CD8-positive, alpha-beta T cell (primary cell): ENCODE measurements at regions of chr2 and their contacts with region 1.

Region 1: DNA sequence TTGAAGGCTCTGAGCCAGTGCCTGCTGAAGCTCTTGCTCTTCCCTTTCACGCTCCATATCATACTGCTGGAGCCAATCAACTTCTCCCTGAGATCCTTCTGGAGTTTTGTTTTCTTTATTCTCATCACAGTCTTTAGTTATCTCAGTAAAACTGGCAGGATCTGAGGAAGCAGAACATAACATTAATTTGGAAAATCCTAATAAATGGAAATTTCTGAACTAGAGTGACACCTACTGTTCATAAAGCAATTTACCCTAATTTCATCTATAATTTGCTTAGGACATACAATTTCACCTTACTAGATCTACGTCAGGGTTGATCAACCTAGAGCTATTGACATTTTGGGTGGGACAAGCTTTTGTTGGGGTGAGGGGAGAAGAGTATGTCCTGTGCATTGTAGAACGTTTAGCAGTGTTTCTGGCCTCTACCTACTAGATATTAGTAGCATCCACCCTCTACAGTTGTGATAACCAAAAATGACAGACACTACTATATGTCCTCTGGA is 47.1 kb downstream of the VIL1 start:
- DNase-seq: peak in 2 of 9 experiments; percentile 21 to 46
- ATAC-seq: peak; percentile 26
- H3K4me3 ChIP-seq: no peak overlapping the region
- H3K4me3 Mint-ChIP-seq: no peak overlapping the region
- H3K27ac ChIP-seq: no peak overlapping the region
- H3K27ac Mint-ChIP-seq: no peak overlapping the region
- H3K4me1 ChIP-seq: no peaks in the 10 kb centered on the region
- H3K4me1 Mint-ChIP-seq: peaks cover 11% of the 10 kb centered on the region
- H3K27me3 ChIP-seq: no peaks in the 10 kb centered on the region
- H3K27me3 Mint-ChIP-seq: no peaks in the 10 kb centered on the region
- CTCF ChIP-seq: peak; percentile 52

Region 2: DNA sequence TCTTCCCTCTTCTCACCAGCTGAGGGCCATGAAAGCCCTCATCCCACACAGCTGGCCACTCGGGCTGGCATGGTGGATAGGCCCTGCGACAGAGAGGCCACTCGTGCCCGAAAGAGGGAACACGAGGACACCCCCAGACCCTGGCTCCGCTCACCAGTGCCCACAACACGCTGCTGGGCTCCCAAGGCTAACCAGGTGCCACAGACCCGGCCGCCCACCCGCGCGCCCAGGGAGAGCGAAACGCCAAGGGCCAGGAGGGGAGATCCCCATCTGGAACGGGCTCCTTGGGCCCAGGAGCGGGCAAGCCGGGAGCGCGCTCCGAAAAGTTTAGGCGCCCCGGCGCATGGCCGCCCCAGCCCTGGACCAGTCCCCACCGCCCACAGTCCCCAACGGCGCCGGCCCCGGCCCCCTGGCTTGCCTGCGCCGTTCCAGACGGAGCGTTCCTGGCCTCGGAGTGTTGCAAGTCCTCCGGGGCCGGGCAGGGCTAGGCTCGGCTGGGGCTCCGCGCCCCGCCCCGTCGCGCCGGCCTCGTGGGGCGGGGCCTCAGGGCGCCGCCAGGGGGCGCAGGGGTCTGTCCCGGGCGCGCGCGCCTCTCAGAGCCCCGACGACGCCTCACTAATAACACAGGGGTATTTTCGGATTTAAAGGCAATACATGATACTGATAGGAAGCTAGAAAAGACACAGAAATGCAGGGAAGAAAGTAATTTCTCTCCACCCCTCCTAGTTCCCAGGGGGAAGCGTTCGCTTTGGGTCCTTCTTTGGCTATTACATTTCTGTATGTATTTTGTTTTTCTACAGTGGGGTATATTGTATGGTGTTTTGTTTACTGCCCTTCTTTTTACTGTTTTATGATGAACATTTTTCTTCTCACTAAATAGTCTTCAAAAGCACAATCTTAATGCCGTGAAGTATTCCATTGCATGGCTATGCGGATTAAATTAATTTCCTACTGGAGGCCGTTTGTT is 173.7 kb before region 1 on chr2 and contains the start of gene TMBIM1:
- CTCF ChIA-PET with region 1: interaction called, 4 read pairs
- POLR2A ChIA-PET with region 1: no interaction called
- intact Hi-C with region 1: loop called in 1 of 2 experiments (anchors 5 kb)
- DNase-seq: peak; percentile 64 to 91 (median 79)
- ATAC-seq: peak; percentile 82
- H3K4me3 ChIP-seq: peak within 1 kb of the TSS; percentile 79 to 89
- H3K4me3 Mint-ChIP-seq: peak within 1 kb of the TSS; percentile 83
- H3K27ac ChIP-seq: peak within 1 kb of the TSS; percentile 72 to 87
- H3K27ac Mint-ChIP-seq: peak within 1 kb of the TSS; percentile 98
- H3K4me1 ChIP-seq: peaks cover 50% of the 10 kb centered on the region
- H3K4me1 Mint-ChIP-seq: peaks cover 51% of the 10 kb centered on the region
- H3K27me3 ChIP-seq: no peaks in the 10 kb centered on the region
- H3K27me3 Mint-ChIP-seq: no peaks in the 10 kb centered on the region
- CTCF ChIP-seq: peak; percentile 93
- total RNA-seq, gene TMBIM1: 80.8 to 86.7 TPM

Region 3: DNA sequence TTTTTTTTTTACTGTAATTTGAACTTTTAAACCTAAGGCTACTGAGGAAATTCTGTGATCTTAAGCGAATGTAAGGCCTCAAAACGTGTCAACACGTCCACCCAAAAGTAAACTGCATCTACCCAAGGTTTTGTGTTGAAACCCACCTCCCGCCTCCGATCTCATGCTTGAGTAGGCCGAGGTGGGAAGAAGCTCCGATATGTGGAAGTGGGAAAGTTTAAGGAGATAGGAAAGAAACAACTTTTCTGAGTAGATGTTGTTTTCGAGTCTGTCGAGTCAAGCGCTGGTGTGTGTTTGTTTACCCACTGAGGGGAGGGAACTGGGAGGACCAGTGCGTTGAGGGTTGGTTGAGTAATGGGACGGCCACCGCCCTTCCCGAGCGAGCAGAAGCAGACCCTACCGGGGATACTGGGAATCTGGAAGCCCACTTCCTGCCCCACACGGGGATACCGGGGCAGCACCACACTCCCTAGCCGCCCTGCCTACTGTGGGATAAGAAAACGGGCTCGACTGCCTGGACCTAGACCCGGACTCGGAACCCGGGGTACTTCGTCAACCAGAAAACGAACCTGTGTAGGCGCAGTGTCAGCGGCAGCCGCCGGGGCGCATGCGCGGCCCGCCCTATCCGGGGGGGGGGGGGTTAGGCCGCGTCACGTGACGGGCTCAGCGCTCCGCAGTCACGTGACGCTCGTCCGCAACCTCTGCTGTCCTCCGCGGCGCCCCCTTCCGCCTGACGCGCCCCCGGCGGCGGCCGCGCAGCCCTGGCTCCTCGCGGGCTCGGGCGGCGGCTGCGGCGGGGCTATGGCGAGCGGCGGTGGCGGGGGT is 711.7 kb after region 1 on chr2 and contains the start of gene RETREG2:
- CTCF ChIA-PET with region 1: no interaction called
- POLR2A ChIA-PET with region 1: no interaction called
- intact Hi-C with region 1: no loop called
- DNase-seq: peak; percentile 61 to 96 (median 78)
- ATAC-seq: peak; percentile 55
- H3K4me3 ChIP-seq: peak within 1 kb of the TSS; percentile 71 to 82
- H3K4me3 Mint-ChIP-seq: peak within 1 kb of the TSS; percentile 91
- H3K27ac ChIP-seq: peak within 1 kb of the TSS; percentile 97 to 98
- H3K27ac Mint-ChIP-seq: peak within 1 kb of the TSS; percentile 99
- H3K4me1 ChIP-seq: peaks cover 75% of the 10 kb centered on the region
- H3K4me1 Mint-ChIP-seq: peaks cover 75% of the 10 kb centered on the region
- H3K27me3 ChIP-seq: no peaks in the 10 kb centered on the region
- H3K27me3 Mint-ChIP-seq: no peaks in the 10 kb centered on the region
- CTCF ChIP-seq: no peak
- total RNA-seq, gene RETREG2: 76.7 to 79.0 TPM